Mammary epithelial cell (primary cell): ENCODE measurements at regions of chr2 and their contacts with region 1.

Region 1: GRCh38 chr2:74876081-74876886 is 42.4 kb downstream of the HK2 start:
- DNase-seq: no peak
- H3K4me3 ChIP-seq: no peak overlapping the region
- H3K27ac ChIP-seq: no peak overlapping the region
- H3K4me1 ChIP-seq: no peaks in the 10 kb centered on the region
- H3K27me3 ChIP-seq: no peaks in the 10 kb centered on the region
- CTCF ChIP-seq: peak; percentile 21 to 48

Region 2: GRCh38 chr2:74317701-74318301 is 558.5 kb before region 1 on chr2:
- CTCF ChIA-PET with region 1: no interaction called
- dilution Hi-C with region 1: no loop called
- in situ Hi-C with region 1: no loop called
- intact Hi-C with region 1: no loop called
- DNase-seq: no peak
- H3K4me3 ChIP-seq: no peak overlapping the region
- H3K27ac ChIP-seq: no peak overlapping the region
- H3K4me1 ChIP-seq: no peaks in the 10 kb centered on the region
- H3K27me3 ChIP-seq: no peaks in the 10 kb centered on the region
- CTCF ChIP-seq: no peak

Region 3: DNA sequence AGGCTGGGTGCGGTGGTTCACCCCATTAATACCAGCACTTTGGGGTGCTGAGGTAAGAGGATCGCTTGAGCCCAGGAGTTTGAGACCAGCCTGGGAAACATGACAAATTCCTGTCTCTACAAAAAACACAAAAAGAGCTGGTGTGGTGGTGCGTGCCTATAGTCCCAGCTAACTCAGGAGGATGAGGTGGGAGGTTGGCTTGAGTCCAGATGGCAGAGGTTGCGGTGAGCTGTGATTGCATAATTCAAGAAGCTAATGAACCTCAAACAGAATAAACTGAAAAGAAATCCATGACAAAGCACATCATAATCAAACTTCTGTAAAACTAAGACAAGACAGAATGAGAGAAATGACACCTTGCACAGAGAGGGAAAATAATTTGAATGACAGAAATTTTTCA is 167.4 kb before region 1 on chr2:
- CTCF ChIA-PET with region 1: no interaction called
- dilution Hi-C with region 1: no loop called
- in situ Hi-C with region 1: loop called in 1 of 2 experiments (anchors 10 kb)
- intact Hi-C with region 1: no loop called
- DNase-seq: peak; percentile 80
- H3K4me3 ChIP-seq: no peak overlapping the region
- H3K27ac ChIP-seq: no peak overlapping the region
- H3K4me1 ChIP-seq: peaks cover 44% of the 10 kb centered on the region
- H3K27me3 ChIP-seq: no peaks in the 10 kb centered on the region
- CTCF ChIP-seq: no peak

Region 4: GRCh38 chr2:74845217-74846011 is 30.9 kb before region 1 on chr2:
- CTCF ChIA-PET with region 1: no interaction called
- dilution Hi-C with region 1: no loop called
- in situ Hi-C with region 1: no loop called
- intact Hi-C with region 1: loop called (anchors 1 kb)
- DNase-seq: peak; percentile 97
- H3K4me3 ChIP-seq: peak overlapping the region in 1 of 3 experiments; percentile 14
- H3K27ac ChIP-seq: peak overlapping the region; percentile 89
- H3K4me1 ChIP-seq: peaks cover 78% of the 10 kb centered on the region
- H3K27me3 ChIP-seq: no peaks in the 10 kb centered on the region
- CTCF ChIP-seq: no peak